ENCODE measurements at regions of chr6 and their contacts with region 1.

Region 1: GRCh38 chr6:26537846-26538571 is at the start of gene HMGN4:
- DNase-seq: peak; percentile 89 to 96 (median 89)
- H3K4me3 ChIP-seq: peak within 1 kb of the TSS; percentile 62 to 96 (median 89)
- H3K4me3 Mint-ChIP-seq: peak within 1 kb of the TSS; percentile 88 to 98
- H3K27ac ChIP-seq: peak within 1 kb of the TSS; percentile 92 to 96
- H3K27ac Mint-ChIP-seq: peak within 1 kb of the TSS; percentile 96 to 98 (median 98)
- H3K4me1 ChIP-seq: peaks cover 25 to 40% of the 10 kb centered on the region in 2 donors
- H3K4me1 Mint-ChIP-seq: peaks cover 40% of the 10 kb centered on the region
- H3K27me3 ChIP-seq: no peaks in the 10 kb centered on the region
- H3K27me3 Mint-ChIP-seq: peaks cover 0 to 1% (median 0%) of the 10 kb centered on the region in 3 donors
- CTCF ChIP-seq: no peak
- polyA plus RNA-seq, gene HMGN4: 28.1 to 116 (median 91.3) TPM

Region 2: DNA sequence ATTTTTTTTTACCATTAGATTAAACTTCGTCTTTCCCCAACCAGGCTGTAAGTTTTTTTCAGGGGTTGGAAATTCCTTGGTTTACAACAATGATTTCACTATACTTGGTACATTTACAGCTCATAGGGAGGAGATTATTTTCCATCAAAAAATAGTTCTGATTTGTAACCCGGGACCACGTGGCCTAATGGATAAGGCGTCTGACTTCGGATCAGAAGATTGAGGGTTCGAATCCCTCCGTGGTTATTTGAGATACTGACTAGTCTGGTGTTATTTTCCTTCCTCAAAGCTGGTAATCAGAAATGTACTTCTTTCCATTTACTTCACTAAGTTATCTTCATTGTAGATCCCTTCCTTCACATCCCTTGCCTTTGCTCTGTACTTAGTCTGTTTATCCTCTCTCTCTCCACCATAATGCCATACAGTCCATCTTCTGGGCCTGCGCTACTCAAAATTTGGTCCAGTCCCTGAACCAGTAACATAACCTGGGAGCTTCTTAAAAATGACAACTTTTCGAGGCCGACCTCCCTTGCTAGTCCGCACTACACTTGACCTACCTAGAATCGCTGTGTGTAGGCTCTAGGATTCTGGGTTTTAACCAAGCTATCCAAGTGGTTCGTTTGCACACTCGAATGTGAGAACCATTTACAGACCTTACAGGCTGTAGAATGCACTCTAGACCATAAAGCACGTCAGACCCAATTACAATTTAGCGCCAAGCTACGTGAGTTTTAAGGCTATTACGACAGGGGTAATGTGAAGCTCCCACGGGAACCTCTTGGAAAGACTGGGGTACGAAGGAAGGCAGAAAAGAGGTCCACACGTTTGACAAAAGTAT is 215.1 kb before region 1 on chr6:
- intact Hi-C with region 1: loop called in 1 of 2 experiments (anchors 10 kb)
- DNase-seq: peak; percentile 56 to 78 (median 76)
- H3K4me3 ChIP-seq: peak overlapping the region; percentile 40 to 84 (median 60)
- H3K4me3 Mint-ChIP-seq: peak overlapping the region; percentile 89 to 92
- H3K27ac ChIP-seq: no peak overlapping the region
- H3K27ac Mint-ChIP-seq: peak overlapping the region in 3 of 7 donors; percentile 15 to 82 (median 27)
- H3K4me1 ChIP-seq: peaks cover 14 to 21% of the 10 kb centered on the region in 2 donors
- H3K4me1 Mint-ChIP-seq: peaks cover 26% of the 10 kb centered on the region
- H3K27me3 ChIP-seq: peaks cover 44 to 79% of the 10 kb centered on the region in 2 donors
- H3K27me3 Mint-ChIP-seq: peaks cover 68 to 84% (median 73%) of the 10 kb centered on the region in 3 donors
- CTCF ChIP-seq: no peak

Region 3: DNA sequence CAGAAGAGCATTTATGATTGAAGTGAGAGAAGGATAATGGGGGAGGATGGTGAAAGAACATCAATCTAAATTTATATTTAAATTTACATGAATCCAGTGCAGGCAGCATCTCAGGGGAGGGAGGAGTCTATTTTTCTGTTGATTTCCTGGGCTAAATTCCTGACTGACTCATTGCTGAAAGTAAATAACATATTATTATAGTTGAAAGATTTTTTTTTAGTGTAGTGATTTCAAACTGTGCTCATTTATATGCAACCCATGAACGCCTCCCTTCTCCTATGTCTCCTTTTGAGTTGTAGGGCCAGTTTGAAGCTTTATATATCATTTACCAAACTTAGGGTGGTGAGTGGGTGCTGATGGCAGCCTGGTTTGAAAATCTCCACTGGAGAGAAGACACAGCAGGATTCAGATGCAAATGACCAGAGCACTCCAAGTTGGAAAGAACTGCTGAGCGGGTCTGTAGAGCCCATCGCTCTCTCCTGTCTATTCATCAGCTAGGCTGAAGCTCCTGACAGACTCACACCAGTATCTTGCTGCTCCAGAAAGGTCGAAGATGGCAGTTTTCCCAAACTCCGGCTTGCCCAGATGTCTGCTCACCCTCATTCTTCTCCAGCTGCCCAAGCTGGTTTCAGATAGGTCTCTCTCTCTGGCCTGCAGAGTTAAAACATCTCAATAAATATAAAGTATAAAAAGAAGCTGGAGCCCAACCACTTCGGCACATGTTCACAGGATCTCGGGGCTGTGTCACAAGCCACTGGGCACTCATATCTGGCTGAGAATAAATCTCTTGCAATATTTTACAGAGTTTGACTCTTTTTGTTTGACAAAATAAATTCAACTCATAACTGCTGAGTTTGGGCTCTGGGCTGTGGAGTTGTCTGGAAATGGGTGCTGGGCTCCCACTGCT is 61.9 kb before region 1 on chr6:
- intact Hi-C with region 1: loop called in 1 of 2 experiments (anchors 5 kb)
- DNase-seq: no peak
- H3K4me3 ChIP-seq: peak overlapping the region in 1 of 3 experiments; percentile 53
- H3K4me3 Mint-ChIP-seq: peak overlapping the region in 1 of 2 donors; percentile 71
- H3K27ac ChIP-seq: peak overlapping the region; percentile 82 to 90
- H3K27ac Mint-ChIP-seq: peak overlapping the region; percentile 91 to 100 (median 95)
- H3K4me1 ChIP-seq: peaks cover 74 to 84% of the 10 kb centered on the region in 2 donors
- H3K4me1 Mint-ChIP-seq: peaks cover 81% of the 10 kb centered on the region
- H3K27me3 ChIP-seq: no peaks in the 10 kb centered on the region
- H3K27me3 Mint-ChIP-seq: no peaks in the 10 kb centered on the region
- CTCF ChIP-seq: no peak

Region 4: GRCh38 chr6:26520853-26521599 is 17.0 kb before region 1 on chr6:
- intact Hi-C with region 1: loop called (anchors 2 kb)
- DNase-seq: peak; percentile 88 to 90 (median 89)
- H3K4me3 ChIP-seq: peak overlapping the region; percentile 66 to 94 (median 88)
- H3K4me3 Mint-ChIP-seq: peak overlapping the region; percentile 88 to 92
- H3K27ac ChIP-seq: peak overlapping the region; percentile 91 to 95
- H3K27ac Mint-ChIP-seq: peak overlapping the region; percentile 91 to 97 (median 96)
- H3K4me1 ChIP-seq: peaks cover 34 to 56% of the 10 kb centered on the region in 2 donors
- H3K4me1 Mint-ChIP-seq: peaks cover 48% of the 10 kb centered on the region
- H3K27me3 ChIP-seq: no peaks in the 10 kb centered on the region
- H3K27me3 Mint-ChIP-seq: peaks cover 0 to 1% (median 0%) of the 10 kb centered on the region in 3 donors
- CTCF ChIP-seq: no peak

Region 5: GRCh38 chr6:26553635-26554446 is 15.8 kb after region 1 on chr6:
- intact Hi-C with region 1: loop called in 1 of 2 experiments (anchors 2 kb)
- DNase-seq: peak; percentile 69 to 83 (median 78)
- H3K4me3 ChIP-seq: peak overlapping the region; percentile 41 to 81 (median 78)
- H3K4me3 Mint-ChIP-seq: no peak overlapping the region
- H3K27ac ChIP-seq: peak overlapping the region in 1 of 2 donors; percentile 21
- H3K27ac Mint-ChIP-seq: no peak overlapping the region
- H3K4me1 ChIP-seq: peaks cover 39 to 40% of the 10 kb centered on the region in 2 donors
- H3K4me1 Mint-ChIP-seq: peaks cover 13% of the 10 kb centered on the region
- H3K27me3 ChIP-seq: no peaks in the 10 kb centered on the region
- H3K27me3 Mint-ChIP-seq: peaks cover 2 to 8% (median 3%) of the 10 kb centered on the region in 3 donors
- CTCF ChIP-seq: no peak

Region 6: GRCh38 chr6:28080631-28081485 is 1542.8 kb after region 1 on chr6:
- intact Hi-C with region 1: loop called in 1 of 2 experiments (anchors 10 kb)
- DNase-seq: peak; percentile 94 to 96 (median 95)
- H3K4me3 ChIP-seq: peak overlapping the region; percentile 53 to 98 (median 80)
- H3K4me3 Mint-ChIP-seq: peak overlapping the region; percentile 96 to 97
- H3K27ac ChIP-seq: peak overlapping the region; percentile 80 to 94
- H3K27ac Mint-ChIP-seq: peak overlapping the region; percentile 93 to 100 (median 99)
- H3K4me1 ChIP-seq: peaks cover 4 to 8% of the 10 kb centered on the region in 2 donors
- H3K4me1 Mint-ChIP-seq: peaks cover 13% of the 10 kb centered on the region
- H3K27me3 ChIP-seq: no peaks in the 10 kb centered on the region
- H3K27me3 Mint-ChIP-seq: peaks cover 0 to 2% (median 0%) of the 10 kb centered on the region in 3 donors
- CTCF ChIP-seq: no peak